Heart left ventricle (tissue), 16 donors: ENCODE measurements at regions of chr2 and their contacts with region 1.

Region 1: GRCh38 chr2:86221066-86221684 is 21.9 kb downstream of the MRPL35 start:
- DNase-seq: peak in 2 of 5 donors; percentile 48 to 50
- ATAC-seq: peak in 1 of 4 donors; percentile 14
- H3K4me3 ChIP-seq: no peak overlapping the region
- H3K27ac ChIP-seq: peak overlapping the region in 4 of 12 donors; percentile 3 to 92 (median 90)
- H3K4me1 ChIP-seq: peaks cover 11 to 59% (median 45%) of the 10 kb centered on the region in 12 donors
- H3K27me3 ChIP-seq: no peaks in the 10 kb centered on the region
- CTCF ChIP-seq: peak; percentile 68 to 96 (median 92)
- POLR2A ChIP-seq: no peak

Region 2: DNA sequence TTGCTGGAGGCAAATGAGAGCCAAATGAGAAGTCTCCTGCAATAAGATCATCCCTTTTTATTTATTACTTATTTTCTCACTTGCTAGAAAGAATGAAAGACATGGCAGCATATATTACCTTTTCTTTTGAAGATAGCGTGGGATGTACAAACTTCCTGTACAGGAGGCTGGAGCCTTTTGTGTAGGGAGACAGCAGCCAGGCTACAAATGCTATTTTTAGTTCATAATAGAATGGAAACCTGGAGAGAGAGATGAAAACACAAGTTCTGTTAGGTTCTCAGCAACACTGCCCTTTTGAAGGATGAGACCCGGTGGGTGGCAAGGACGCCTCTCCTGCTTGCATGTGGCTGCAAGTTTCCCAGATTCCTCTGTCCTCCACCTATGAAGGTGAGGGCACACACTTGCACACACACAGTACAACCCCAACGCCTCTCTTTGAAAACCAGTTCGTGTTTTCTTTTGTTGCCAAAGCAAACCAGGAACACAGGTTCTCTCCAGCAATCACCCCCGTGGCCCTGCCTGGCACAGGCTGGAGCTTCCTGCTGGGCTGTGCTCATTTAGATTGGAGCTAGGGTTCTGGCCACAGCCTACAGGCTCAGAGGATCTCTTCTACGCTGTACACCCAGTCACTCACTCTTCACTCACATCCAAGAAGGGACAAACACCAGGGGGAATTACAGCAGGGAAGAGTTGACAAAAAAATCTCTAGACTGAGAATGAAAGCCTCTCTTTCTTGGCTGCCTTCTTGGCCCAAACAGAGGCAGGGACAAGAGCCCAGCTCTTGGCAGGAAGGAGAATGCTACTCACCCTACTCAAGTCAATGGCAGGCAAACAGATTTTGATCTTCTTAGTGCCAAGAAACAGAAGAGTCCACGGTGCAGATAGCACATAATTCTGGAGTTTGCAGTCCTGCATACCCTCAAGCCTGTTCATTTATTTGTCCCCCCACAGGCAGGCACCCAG is 33.7 kb after region 1 on chr2:
- intact Hi-C with region 1: loop called in 1 of 10 experiments (anchors 1 kb)
- DNase-seq: peak in 4 of 5 donors; percentile 45 to 81 (median 58)
- ATAC-seq: peak; percentile 96 to 99 (median 98)
- H3K4me3 ChIP-seq: peak overlapping the region in 2 of 12 donors; percentile 9 to 10
- H3K27ac ChIP-seq: peak overlapping the region; percentile 35 to 82 (median 70)
- H3K4me1 ChIP-seq: peaks cover 0 to 51% (median 22%) of the 10 kb centered on the region in 12 donors
- H3K27me3 ChIP-seq: no peaks in the 10 kb centered on the region
- CTCF ChIP-seq: no peak
- POLR2A ChIP-seq: no peak

Region 3: DNA sequence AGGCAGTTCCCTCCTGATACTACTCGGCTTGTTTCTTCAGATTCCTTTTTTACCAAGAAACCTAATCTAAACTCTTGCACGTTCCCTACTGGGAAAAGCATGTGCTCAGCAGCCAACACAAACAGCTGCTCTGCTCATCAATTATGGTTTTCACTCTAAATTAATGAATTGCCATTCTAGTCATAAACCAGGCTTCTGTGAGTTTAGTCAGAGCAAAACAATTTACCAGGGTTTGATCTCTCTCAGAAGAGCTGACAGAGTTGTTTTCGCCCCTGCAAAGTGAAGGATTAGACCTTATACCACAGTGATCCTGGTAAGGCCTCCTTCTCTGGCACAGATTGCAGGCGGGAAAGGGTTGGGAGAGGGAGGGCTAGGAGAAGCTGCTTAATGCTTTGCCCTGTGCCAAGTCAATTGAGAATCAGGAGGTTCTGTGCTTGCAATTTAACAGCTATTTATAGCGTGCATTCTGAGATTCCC is 59.1 kb after region 1 on chr2:
- intact Hi-C with region 1: loop called in 3 of 10 experiments (anchors 5 to 10 kb)
- DNase-seq: peak in 1 of 5 donors; percentile 36
- ATAC-seq: peak; percentile 43 to 66 (median 62)
- H3K4me3 ChIP-seq: no peak overlapping the region
- H3K27ac ChIP-seq: peak overlapping the region in 7 of 12 donors; percentile 8 to 76 (median 39)
- H3K4me1 ChIP-seq: peaks cover 2 to 58% (median 23%) of the 10 kb centered on the region in 12 donors
- H3K27me3 ChIP-seq: no peaks in the 10 kb centered on the region
- CTCF ChIP-seq: no peak
- POLR2A ChIP-seq: no peak

Region 4: DNA sequence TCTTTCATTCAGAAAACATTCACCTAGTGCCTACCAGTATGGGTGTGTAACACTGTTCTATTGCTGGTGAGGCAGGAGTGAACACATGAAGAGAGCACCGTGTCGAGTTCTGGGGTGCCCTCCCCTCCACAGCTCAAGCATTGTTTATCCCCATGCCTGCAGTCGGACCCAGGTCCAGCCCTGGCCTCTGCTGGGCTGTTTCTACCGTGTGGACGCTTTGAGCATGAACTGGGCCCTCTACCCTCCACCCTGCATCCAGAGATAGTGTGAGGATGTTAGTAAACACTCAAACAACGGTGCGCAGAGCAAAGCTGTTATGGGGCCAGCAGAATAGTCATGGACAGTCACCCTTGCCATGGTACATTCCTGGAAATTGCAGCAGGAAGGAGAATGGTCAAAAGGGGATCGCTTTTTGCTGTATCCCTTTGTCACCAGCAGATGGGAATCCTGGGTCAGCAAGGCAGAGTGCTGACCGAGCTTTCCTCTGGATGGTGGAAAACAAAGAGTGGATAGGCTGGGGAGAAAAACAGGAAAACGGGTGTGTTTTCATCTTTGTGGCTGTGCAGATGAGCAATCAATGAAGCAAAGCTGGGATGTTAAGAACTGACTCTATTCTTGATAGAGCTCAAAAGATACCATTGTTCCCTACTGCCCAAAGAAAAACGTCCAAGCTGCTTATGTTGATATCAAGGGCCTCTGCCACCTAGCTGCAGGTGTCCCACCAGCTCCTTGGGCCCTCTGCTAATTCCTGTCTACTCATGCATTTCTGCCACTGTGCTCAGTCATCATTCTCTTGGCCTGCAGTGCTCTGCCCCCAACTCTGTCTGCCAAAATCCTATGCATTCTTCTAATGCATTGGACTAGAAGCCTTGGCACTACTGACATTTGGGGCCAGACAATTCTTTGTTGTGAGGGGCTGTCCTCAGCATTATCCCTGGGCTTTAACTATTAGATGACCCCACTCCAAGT is 77.5 kb after region 1 on chr2:
- intact Hi-C with region 1: loop called in 5 of 10 experiments (anchors 2 to 5 kb)
- DNase-seq: no peak
- ATAC-seq: peak; percentile 47 to 67 (median 58)
- H3K4me3 ChIP-seq: no peak overlapping the region
- H3K27ac ChIP-seq: peak overlapping the region in 8 of 12 donors; percentile 9 to 76 (median 44)
- H3K4me1 ChIP-seq: peaks cover 0 to 58% (median 38%) of the 10 kb centered on the region in 12 donors
- H3K27me3 ChIP-seq: no peaks in the 10 kb centered on the region
- CTCF ChIP-seq: peak; percentile 8 to 68 (median 50)
- POLR2A ChIP-seq: no peak

Region 5: GRCh38 chr2:86368161-86368824 is 147.1 kb after region 1 on chr2:
- intact Hi-C with region 1: loop called (anchors 1 to 5 kb)
- DNase-seq: peak in 4 of 5 donors; percentile 25 to 66 (median 41)
- ATAC-seq: peak; percentile 37 to 64 (median 56)
- H3K4me3 ChIP-seq: peak overlapping the region in 2 of 12 donors; percentile 10 to 22
- H3K27ac ChIP-seq: no peak overlapping the region
- H3K4me1 ChIP-seq: peaks cover 0 to 21% (median 4%) of the 10 kb centered on the region in 12 donors
- H3K27me3 ChIP-seq: no peaks in the 10 kb centered on the region
- CTCF ChIP-seq: peak; percentile 44 to 74 (median 63)
- POLR2A ChIP-seq: no peak

Region 6: DNA sequence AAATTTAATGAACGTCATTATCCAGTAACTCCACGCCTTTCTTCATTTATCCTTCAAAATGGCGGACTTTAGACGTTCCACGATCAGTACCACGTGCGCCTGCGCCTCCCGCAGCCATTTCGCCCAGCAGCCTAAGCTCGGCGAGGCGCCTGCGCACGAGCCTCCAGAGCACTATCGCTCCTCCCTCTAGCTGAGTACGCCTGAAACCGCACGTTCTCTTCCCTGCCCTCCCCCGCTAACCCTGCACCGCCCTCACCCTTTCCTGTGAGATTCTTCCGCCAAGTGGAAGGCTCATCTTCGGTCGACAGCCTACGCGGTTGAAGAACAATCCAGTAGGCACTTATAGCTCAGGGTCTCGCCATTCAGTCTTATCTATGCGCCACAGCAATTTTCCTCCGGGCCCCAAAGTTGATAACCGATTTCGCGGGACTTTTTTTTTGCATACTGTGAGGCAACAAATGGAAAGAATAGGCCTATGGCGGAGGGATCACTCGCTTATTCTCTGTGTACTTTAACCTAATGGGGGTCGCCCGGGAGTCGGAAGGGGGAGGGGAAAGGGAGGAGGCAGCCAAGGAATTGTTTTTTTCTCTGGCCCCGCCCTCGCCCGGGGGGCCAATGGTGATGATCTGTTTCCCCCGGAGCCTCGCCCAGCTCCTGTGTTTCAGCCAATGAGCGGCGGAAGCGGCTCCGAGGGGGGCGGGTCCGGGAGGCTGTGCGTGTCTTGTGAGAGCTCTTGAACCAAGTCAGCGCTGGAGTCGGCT is 219.6 kb after region 1 on chr2 and contains the start of gene KDM3A:
- intact Hi-C with region 1: loop called in 2 of 10 experiments (anchors 5 to 10 kb)
- DNase-seq: peak; percentile 99 to 100 (median 100)
- ATAC-seq: peak; percentile 94 to 96 (median 95)
- H3K4me3 ChIP-seq: peak within 1 kb of the TSS; percentile 67 to 97 (median 76)
- H3K27ac ChIP-seq: peak within 1 kb of the TSS; percentile 91 to 99 (median 96)
- H3K4me1 ChIP-seq: peaks cover 0 to 35% (median 31%) of the 10 kb centered on the region in 12 donors
- H3K27me3 ChIP-seq: no peaks in the 10 kb centered on the region
- CTCF ChIP-seq: peak in 2 of 12 donors; percentile 15 to 25
- POLR2A ChIP-seq: peak in 1 of 2 donors; percentile 99
- total RNA-seq, gene KDM3A: 17.7 to 44.0 (median 35.4) TPM

Region 7: GRCh38 chr2:86603905-86604304 is 382.7 kb after region 1 on chr2:
- intact Hi-C with region 1: no loop called
- DNase-seq: no peak
- ATAC-seq: no peak
- H3K4me3 ChIP-seq: no peak overlapping the region
- H3K27ac ChIP-seq: peak overlapping the region in 1 of 12 donors; percentile 2
- H3K4me1 ChIP-seq: peaks cover 0 to 6% (median 0%) of the 10 kb centered on the region in 12 donors
- H3K27me3 ChIP-seq: no peaks in the 10 kb centered on the region
- CTCF ChIP-seq: no peak
- POLR2A ChIP-seq: no peak